ENCODE measurements at regions of chr15 and their contacts with region 1.

Region 1: DNA sequence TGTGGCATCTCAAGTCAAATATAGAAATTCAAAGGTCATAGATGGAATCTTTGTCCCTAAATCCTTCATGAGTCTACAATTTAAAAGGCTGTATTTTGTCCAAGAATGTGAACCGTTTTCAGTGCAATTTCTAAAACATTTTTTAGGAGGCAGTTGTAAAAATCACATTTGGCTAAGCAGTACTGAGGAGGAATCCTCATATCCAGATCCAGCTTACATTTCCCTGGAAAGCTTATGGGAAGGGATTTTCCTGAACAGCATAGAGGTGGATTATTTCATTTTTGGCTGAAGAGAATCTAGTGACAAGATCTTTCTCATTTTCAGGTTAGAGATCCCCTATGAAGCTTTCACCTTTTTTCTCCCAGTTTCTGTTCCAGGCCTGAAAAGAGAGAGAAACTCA is 178.4 kb downstream of the POLR2M start:
- DNase-seq: no peak
- H3K4me3 ChIP-seq: no peak overlapping the region
- H3K27ac ChIP-seq: no peak overlapping the region
- H3K4me1 ChIP-seq: no peaks in the 10 kb centered on the region
- H3K27me3 ChIP-seq: no peaks in the 10 kb centered on the region
- CTCF ChIP-seq: no peak

Region 2: DNA sequence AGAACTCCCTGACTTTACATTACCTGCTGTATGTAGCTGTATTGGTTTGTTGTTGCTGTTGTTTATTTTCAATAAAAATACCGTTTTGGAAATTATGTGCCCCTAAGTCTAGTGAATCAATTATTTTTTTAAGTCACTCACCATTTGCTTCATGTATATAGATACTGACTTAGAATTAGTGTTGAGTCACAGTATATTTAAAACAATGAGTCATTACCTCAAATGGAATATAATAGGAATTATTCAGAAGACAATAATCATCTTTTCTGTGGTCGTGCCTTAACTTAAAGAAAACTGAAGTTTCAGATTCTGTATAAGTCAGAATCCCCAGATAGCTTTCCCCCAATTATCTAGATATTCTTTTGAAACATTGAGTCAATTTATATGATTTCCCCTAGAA is 201.6 kb after region 1 on chr15:
- intact Hi-C with region 1: loop called (anchors 5 kb)
- DNase-seq: no peak
- H3K4me3 ChIP-seq: no peak overlapping the region
- H3K27ac ChIP-seq: no peak overlapping the region
- H3K4me1 ChIP-seq: no peaks in the 10 kb centered on the region
- H3K27me3 ChIP-seq: peaks cover 4% of the 10 kb centered on the region
- CTCF ChIP-seq: no peak

Region 3: GRCh38 chr15:58690703-58691102 is 805.8 kb after region 1 on chr15:
- intact Hi-C with region 1: no loop called
- DNase-seq: no peak
- H3K4me3 ChIP-seq: no peak overlapping the region
- H3K27ac ChIP-seq: no peak overlapping the region
- H3K4me1 ChIP-seq: peaks cover 41% of the 10 kb centered on the region
- H3K27me3 ChIP-seq: no peaks in the 10 kb centered on the region
- CTCF ChIP-seq: no peak

Measured in left ventricle myocardium inferior (tissue), 1 donor.